SK-N-SH (cell line): ENCODE measurements at regions of chr17 and their contacts with region 1.

Region 1: GRCh38 chr17:61399131-61400057 is at the start of gene TBX2:
- DNase-seq: peak; percentile 98
- H3K4me3 ChIP-seq: peak within 1 kb of the TSS; percentile 96 to 100
- H3K27ac ChIP-seq: peak within 1 kb of the TSS; percentile 75 to 90
- H3K4me1 ChIP-seq: peaks cover 17 to 57% of the 10 kb centered on the region in 2 experiments; a peak in 3 of 4 replicates
- H3K27me3 ChIP-seq: no peaks in the 10 kb centered on the region
- CTCF ChIP-seq: no peak; the same call in 1 of the 2 replicates
- EP300 ChIP-seq: peak in 1 of 2 experiments; percentile 12; a peak in 1 of 4 replicates
- RAD21 ChIP-seq: peak; percentile 12
- polyA plus RNA-seq, gene TBX2: 37.8 and 57.8 TPM in 2 replicates

Region 2: GRCh38 chr17:61002316-61002736 is 397.1 kb before region 1 on chr17:
- CTCF ChIA-PET with region 1: interaction called, 14 read pairs
- POLR2A ChIA-PET with region 1: no interaction called
- DNase-seq: peak; percentile 55
- H3K4me3 ChIP-seq: no peak overlapping the region
- H3K27ac ChIP-seq: peak overlapping the region; percentile 46 to 78; a peak in 3 of 4 replicates
- H3K4me1 ChIP-seq: peaks cover 3 to 7% of the 10 kb centered on the region in 2 experiments; a peak in 1 of 4 replicates
- H3K27me3 ChIP-seq: no peaks in the 10 kb centered on the region
- CTCF ChIP-seq: peak; percentile 92
- EP300 ChIP-seq: peak; percentile 52 to 64; a peak in 2 of 4 replicates
- RAD21 ChIP-seq: peak; percentile 98

Region 3: GRCh38 chr17:61144741-61145564 is 254.4 kb before region 1 on chr17:
- CTCF ChIA-PET with region 1: interaction called, 10 read pairs
- POLR2A ChIA-PET with region 1: interaction called, 10 read pairs
- DNase-seq: peak; percentile 84
- H3K4me3 ChIP-seq: peak overlapping the region; percentile 4 to 45; a peak in 3 of 4 replicates
- H3K27ac ChIP-seq: peak overlapping the region; percentile 91 to 94
- H3K4me1 ChIP-seq: peaks cover 41 to 58% of the 10 kb centered on the region in 2 experiments
- H3K27me3 ChIP-seq: no peaks in the 10 kb centered on the region
- CTCF ChIP-seq: no peak
- EP300 ChIP-seq: peak; percentile 98 to 99
- RAD21 ChIP-seq: peak; percentile 62

Region 4: GRCh38 chr17:61383689-61384201 is 15.6 kb before region 1 on chr17:
- CTCF ChIA-PET with region 1: interaction called, 133 read pairs
- POLR2A ChIA-PET with region 1: interaction called, 105 read pairs
- DNase-seq: peak; percentile 81
- H3K4me3 ChIP-seq: no peak overlapping the region
- H3K27ac ChIP-seq: peak overlapping the region; percentile 34 to 97; a peak in 3 of 4 replicates
- H3K4me1 ChIP-seq: peaks cover 0 to 94% of the 10 kb centered on the region in 2 experiments; a peak in 3 of 4 replicates
- H3K27me3 ChIP-seq: no peaks in the 10 kb centered on the region
- CTCF ChIP-seq: no peak
- EP300 ChIP-seq: peak in 1 of 2 experiments; percentile 92; a peak in 3 of 4 replicates
- RAD21 ChIP-seq: peak; percentile 39

Region 5: DNA sequence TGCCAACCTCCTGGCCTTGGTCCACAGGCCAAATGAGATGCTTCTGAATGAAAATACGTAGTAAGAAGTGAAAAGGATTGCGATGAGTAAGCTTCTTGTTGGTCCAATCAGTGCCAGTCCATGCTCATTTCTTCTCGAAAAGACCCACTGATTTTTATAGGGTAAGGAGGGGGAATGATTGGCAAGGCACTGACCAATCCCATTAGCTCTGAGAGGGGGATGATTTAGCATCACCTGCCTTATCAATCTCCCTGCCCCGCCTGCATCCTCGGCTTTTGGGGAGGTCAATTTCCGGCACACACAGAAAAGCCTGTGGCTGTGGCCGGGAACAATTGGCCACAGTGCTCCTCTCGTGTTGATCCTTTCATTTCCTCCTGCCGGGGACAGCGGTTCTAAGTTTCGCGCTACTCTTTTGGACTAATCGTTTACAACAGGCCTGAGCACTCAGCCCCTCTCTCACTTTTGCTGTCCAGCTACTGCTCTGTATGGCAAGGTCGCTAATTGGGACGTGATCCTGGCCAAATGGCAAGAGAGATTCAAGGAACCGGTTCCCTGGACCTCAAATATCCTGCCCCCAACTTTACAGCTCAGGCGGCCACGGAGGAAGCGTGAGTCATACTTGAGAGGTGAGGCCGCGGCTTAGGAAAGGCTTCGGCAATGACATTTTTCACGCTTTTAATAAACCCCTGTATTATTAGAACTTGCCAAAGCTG is 95.9 kb after region 1 on chr17:
- CTCF ChIA-PET with region 1: no interaction called
- POLR2A ChIA-PET with region 1: no interaction called
- DNase-seq: no peak
- H3K4me3 ChIP-seq: no peak overlapping the region
- H3K27ac ChIP-seq: no peak overlapping the region
- H3K4me1 ChIP-seq: peaks cover 4 to 16% of the 10 kb centered on the region in 2 experiments; a peak in 2 of 4 replicates
- H3K27me3 ChIP-seq: no peaks in the 10 kb centered on the region
- CTCF ChIP-seq: no peak
- EP300 ChIP-seq: no peak
- RAD21 ChIP-seq: no peak